Sciatic nerve (tissue), 2 donors: ENCODE measurements at regions of chr20 and their contacts with region 1.

Region 1: GRCh38 chr20:6466075-6466810 is 301.2 kb upstream of the BMP2 start:
- DNase-seq: no peak
- ATAC-seq: no peak

Region 2: DNA sequence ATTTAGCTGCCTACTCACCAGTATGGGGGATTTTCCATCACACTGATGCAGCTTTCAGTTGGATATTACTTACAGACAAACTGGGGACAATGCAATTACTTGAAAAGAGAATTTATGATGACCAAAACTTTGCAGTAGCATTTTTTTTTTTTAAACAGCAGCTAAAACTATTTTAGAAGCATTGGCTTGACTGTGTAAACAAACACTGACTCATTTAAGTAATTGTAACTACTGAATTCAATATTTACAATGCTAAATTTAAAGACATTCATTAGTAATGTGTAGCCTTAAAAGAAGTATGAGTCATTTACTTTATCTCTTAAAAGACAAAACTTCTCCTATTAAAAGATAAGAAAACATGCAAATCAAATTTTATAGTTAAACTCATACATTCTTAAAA is 47.5 kb before region 1 on chr20:
- intact Hi-C with region 1: no loop called
- DNase-seq: no peak
- ATAC-seq: no peak

Region 3: GRCh38 chr20:6501061-6501460 is 34.8 kb after region 1 on chr20:
- intact Hi-C with region 1: no loop called
- DNase-seq: no peak
- ATAC-seq: no peak

Region 4: DNA sequence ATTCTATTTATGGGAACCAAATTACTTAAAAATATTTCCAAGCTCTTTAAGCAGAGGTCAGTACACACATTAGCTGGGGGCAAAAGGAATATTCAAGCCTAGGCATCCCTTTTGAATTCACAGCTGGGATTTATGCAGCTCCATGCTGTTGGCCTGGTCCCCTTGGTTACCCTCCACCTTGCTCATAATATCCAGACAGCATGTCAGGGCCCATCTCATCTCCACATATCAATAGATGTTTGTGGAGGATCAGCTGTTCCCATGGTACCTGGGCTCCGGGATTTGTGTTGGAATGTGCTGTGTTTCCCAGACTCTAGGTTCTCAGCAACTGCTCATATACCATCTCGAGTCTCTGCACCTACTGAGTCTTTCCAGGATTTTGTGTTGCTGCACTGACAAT is 836.0 kb after region 1 on chr20:
- intact Hi-C with region 1: no loop called
- DNase-seq: no peak
- ATAC-seq: no peak

Region 5: GRCh38 chr20:7758406-7758805 is 1292.2 kb after region 1 on chr20:
- intact Hi-C with region 1: loop called (anchors 5 kb)
- DNase-seq: no peak
- ATAC-seq: no peak